Ascending aorta (tissue), 2 donors: ENCODE measurements at regions of chr14 and their contacts with region 1.

Region 1: GRCh38 chr14:80850197-80850814 is 91.2 kb downstream of the CEP128 start:
- DNase-seq: no peak
- H3K4me3 ChIP-seq: no peak overlapping the region
- H3K27ac ChIP-seq: no peak overlapping the region
- H3K4me1 ChIP-seq: no peaks in the 10 kb centered on the region
- H3K27me3 ChIP-seq: no peaks in the 10 kb centered on the region
- CTCF ChIP-seq: peak; percentile 23 to 64 (median 46)

Region 2: GRCh38 chr14:78959674-78960264 is 1890.5 kb before region 1 on chr14:
- intact Hi-C with region 1: loop called (anchors 10 kb)
- DNase-seq: peak in 1 of 2 donors; percentile 82
- H3K4me3 ChIP-seq: peak overlapping the region; percentile 41 to 48
- H3K27ac ChIP-seq: peak overlapping the region; percentile 23 to 58
- H3K4me1 ChIP-seq: no peaks in the 10 kb centered on the region
- H3K27me3 ChIP-seq: no peaks in the 10 kb centered on the region
- CTCF ChIP-seq: peak; percentile 61 to 85 (median 84)

Region 3: GRCh38 chr14:80055667-80056496 is 794.4 kb before region 1 on chr14:
- intact Hi-C with region 1: loop called (anchors 5 kb)
- DNase-seq: no peak
- H3K4me3 ChIP-seq: peak overlapping the region in 1 of 2 donors; percentile 28
- H3K27ac ChIP-seq: no peak overlapping the region
- H3K4me1 ChIP-seq: no peaks in the 10 kb centered on the region
- H3K27me3 ChIP-seq: no peaks in the 10 kb centered on the region
- CTCF ChIP-seq: peak; percentile 23 to 68 (median 47)

Region 4: GRCh38 chr14:80475074-80475473 is 375.2 kb before region 1 on chr14:
- intact Hi-C with region 1: no loop called
- DNase-seq: no peak
- H3K4me3 ChIP-seq: no peak overlapping the region
- H3K27ac ChIP-seq: no peak overlapping the region
- H3K4me1 ChIP-seq: peaks cover 0 to 7% of the 10 kb centered on the region in 2 donors
- H3K27me3 ChIP-seq: no peaks in the 10 kb centered on the region
- CTCF ChIP-seq: no peak

Region 5: GRCh38 chr14:80872645-80873044 is 22.3 kb after region 1 on chr14:
- intact Hi-C with region 1: no loop called
- DNase-seq: no peak
- H3K4me3 ChIP-seq: no peak overlapping the region
- H3K27ac ChIP-seq: no peak overlapping the region
- H3K4me1 ChIP-seq: no peaks in the 10 kb centered on the region
- H3K27me3 ChIP-seq: no peaks in the 10 kb centered on the region
- CTCF ChIP-seq: no peak